CD4-positive, alpha-beta memory T cell (primary cell): ENCODE measurements at regions of chrX and their contacts with region 1.

Region 1: GRCh38 chrX:2595258-2595657 is 94.5 kb upstream of the DHRSX start:
- DNase-seq: no peak
- H3K4me3 ChIP-seq: no peak overlapping the region
- H3K4me3 Mint-ChIP-seq: no peak overlapping the region
- H3K27ac ChIP-seq: no peak overlapping the region
- H3K27ac Mint-ChIP-seq: no peak overlapping the region
- H3K4me1 ChIP-seq: no peaks in the 10 kb centered on the region
- H3K4me1 Mint-ChIP-seq: peaks cover 11 to 16% (median 15%) of the 10 kb centered on the region in 4 donors
- H3K27me3 ChIP-seq: no peaks in the 10 kb centered on the region
- H3K27me3 Mint-ChIP-seq: no peaks in the 10 kb centered on the region

Region 2: GRCh38 chrX:1649621-1650020 is 945.6 kb before region 1 on chrX:
- CTCF ChIA-PET with region 1: no interaction called
- POLR2A ChIA-PET with region 1: no interaction called
- intact Hi-C with region 1: loop called (anchors 1 kb)
- DNase-seq: no peak
- H3K4me3 ChIP-seq: no peak overlapping the region
- H3K4me3 Mint-ChIP-seq: no peak overlapping the region
- H3K27ac ChIP-seq: no peak overlapping the region
- H3K27ac Mint-ChIP-seq: no peak overlapping the region
- H3K4me1 ChIP-seq: no peaks in the 10 kb centered on the region
- H3K4me1 Mint-ChIP-seq: peaks cover 5 to 10% (median 8%) of the 10 kb centered on the region in 4 donors
- H3K27me3 ChIP-seq: no peaks in the 10 kb centered on the region
- H3K27me3 Mint-ChIP-seq: peaks cover 2 to 8% of the 10 kb centered on the region in 2 donors

Region 3: GRCh38 chrX:1673337-1673736 is 921.9 kb before region 1 on chrX:
- CTCF ChIA-PET with region 1: no interaction called
- POLR2A ChIA-PET with region 1: no interaction called
- intact Hi-C with region 1: loop called (anchors 1 kb)
- DNase-seq: peak in 4 of 5 donors; percentile 32 to 52 (median 44)
- H3K4me3 ChIP-seq: no peak overlapping the region
- H3K4me3 Mint-ChIP-seq: no peak overlapping the region
- H3K27ac ChIP-seq: no peak overlapping the region
- H3K27ac Mint-ChIP-seq: no peak overlapping the region
- H3K4me1 ChIP-seq: no peaks in the 10 kb centered on the region
- H3K4me1 Mint-ChIP-seq: peaks cover 4 to 9% (median 7%) of the 10 kb centered on the region in 4 donors
- H3K27me3 ChIP-seq: no peaks in the 10 kb centered on the region
- H3K27me3 Mint-ChIP-seq: no peaks in the 10 kb centered on the region